GM10248 (cell line): ENCODE measurements at regions of chr21 and their contacts with region 1.

Region 1: DNA sequence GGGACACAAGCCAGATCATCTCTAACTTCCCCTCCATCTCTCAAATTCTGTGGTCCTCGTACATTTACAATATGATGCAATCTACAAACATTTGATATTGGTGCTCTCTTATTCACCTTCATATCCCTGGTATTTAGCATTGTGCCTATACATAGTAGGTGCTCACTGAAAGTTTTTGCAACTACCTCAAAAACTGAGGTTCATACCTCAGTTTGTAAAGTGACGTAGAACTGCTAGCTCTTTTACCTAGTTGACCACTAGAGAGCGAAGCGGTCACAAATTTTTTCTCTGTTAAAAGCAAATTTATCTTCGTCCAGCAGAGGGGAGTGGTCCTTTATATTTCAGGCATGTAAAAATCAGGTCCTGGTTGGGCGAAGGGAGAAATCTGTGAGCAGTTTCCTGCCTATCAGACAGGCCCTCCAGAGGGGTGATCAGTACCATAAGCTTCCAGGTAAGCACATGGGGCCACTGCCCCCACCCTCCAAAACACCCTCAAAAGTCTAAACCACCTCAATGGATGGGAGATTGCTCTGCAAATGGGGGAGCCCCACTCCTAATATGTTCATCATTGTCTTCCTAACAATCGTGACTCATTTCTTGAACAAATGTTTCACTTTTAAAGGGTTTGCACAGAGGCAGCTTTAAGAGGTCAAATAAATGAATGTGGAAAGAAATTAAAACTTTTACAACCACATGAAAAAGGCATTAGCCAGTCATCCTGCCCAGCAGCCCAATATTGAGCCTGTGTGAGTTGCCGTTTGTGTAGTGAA is 10.6 kb upstream of the HLCS start:
- DNase-seq: peak; percentile 59
- CTCF ChIP-seq: peak; percentile 75

Region 2: DNA sequence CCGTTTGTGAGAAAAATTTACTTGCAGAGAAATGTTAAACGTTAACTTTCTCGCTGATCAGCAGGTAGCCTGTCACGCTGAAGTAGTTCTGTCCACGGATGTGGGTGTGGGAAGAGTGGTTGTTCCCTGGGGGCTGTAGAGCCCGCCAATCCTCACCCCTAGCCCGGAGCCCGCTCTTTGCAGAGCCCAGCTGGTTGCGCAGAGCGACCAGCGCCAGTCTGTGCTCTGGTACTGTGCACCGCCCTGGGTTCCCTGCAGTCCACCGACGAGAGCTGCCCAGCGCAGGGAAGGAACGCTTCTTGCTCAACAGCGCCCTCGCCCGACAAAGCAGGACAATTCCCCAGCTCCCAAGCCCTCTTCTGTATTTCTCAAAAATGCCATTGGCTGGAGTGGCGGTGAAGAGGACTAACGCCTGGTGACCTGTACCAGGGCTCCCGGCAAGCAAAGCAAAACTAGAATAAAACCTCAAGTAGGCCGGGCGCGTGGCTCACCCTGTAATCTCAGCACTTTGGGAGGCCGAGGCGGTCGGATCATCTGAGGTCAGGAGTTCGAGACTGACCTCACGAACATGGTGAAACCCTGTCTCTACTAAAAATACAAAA is 32.8 kb after region 1 on chr21:
- CTCF ChIA-PET with region 1: interaction called, 38 read pairs
- POLR2A ChIA-PET with region 1: no interaction called
- DNase-seq: peak; percentile 89
- CTCF ChIP-seq: peak; percentile 93